T-cell (primary cell): ENCODE measurements at regions of chr15 and their contacts with region 1.

Region 1: DNA sequence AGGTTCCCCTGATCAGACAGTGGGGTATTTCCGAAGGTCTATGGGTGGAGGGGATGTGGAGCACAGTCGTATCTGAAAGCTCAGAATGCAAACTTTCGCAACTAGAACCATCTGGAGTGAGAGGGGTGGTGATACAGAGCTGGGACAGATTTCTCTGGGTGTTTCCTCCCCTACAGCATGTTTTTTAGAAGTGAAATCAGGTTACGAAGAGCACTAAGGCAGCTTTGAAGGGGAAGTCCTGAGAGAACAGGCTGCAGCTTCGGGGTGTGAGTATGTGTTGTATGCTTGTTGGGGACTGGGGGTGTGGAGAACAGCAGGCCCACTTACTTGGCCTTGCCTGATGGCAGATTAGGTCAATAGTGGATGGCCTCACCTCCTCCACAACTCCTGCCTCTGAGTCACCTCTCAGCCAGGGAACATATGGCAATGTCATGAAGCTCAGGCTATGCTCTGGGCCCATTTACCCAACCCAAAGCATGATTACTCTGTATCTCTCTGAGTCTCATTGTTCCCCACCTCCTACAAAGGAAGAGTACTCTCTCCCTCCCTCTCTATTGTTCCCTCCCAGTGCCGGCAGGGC is 107.2 kb upstream of the RASGRP1 start:
- DNase-seq: peak in 31 of 35 experiments; percentile 22 to 88 (median 65)
- ATAC-seq: peak; percentile 47 to 78 (median 50)
- H3K4me3 ChIP-seq: no peak overlapping the region
- H3K4me3 Mint-ChIP-seq: peak overlapping the region; percentile 40 to 64 (median 47)
- H3K27ac ChIP-seq: peak overlapping the region; percentile 98
- H3K27ac Mint-ChIP-seq: peak overlapping the region; percentile 95 to 98
- H3K4me1 ChIP-seq: peaks cover 55 to 62% of the 10 kb centered on the region in 2 experiments
- H3K4me1 Mint-ChIP-seq: peaks cover 72 to 86% (median 78%) of the 10 kb centered on the region in 3 donors
- H3K27me3 ChIP-seq: no peaks in the 10 kb centered on the region
- H3K27me3 Mint-ChIP-seq: no peaks in the 10 kb centered on the region

Region 2: GRCh38 chr15:38563723-38564519 is 107.8 kb before region 1 on chr15:
- CTCF ChIA-PET with region 1: interaction called, 10 to 29 read pairs
- POLR2A ChIA-PET with region 1: interaction called, 3 to 8 read pairs
- DNase-seq: peak; percentile 65 to 92 (median 82)
- ATAC-seq: peak; percentile 75 to 77 (median 76)
- H3K4me3 ChIP-seq: peak overlapping the region; percentile 90
- H3K4me3 Mint-ChIP-seq: peak overlapping the region; percentile 87 to 96 (median 88)
- H3K27ac ChIP-seq: peak overlapping the region; percentile 83
- H3K27ac Mint-ChIP-seq: peak overlapping the region; percentile 94 to 98
- H3K4me1 ChIP-seq: peaks cover 40 to 51% of the 10 kb centered on the region in 2 experiments
- H3K4me1 Mint-ChIP-seq: peaks cover 58 to 65% (median 64%) of the 10 kb centered on the region in 3 donors
- H3K27me3 ChIP-seq: no peaks in the 10 kb centered on the region
- H3K27me3 Mint-ChIP-seq: no peaks in the 10 kb centered on the region

Region 3: DNA sequence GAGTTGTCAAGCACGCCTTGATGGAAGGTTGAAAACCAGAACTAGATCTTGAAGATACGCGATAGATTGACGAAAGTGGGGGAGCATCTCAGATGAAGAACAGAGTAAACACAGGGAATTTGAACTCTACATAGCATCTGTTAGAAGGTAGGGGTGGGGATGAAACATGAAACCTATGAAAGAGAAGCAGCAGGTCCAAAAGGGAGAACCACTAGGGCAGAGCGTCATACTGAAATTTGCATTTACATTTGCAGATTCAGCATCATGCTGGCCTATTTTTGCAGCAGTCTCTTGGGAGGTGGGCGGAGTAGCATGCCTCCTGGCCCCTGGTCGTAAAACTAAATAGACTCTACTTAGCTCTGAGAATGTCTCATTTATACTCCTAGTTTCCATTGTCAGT is 61.0 kb before region 1 on chr15:
- CTCF ChIA-PET with region 1: no interaction called
- POLR2A ChIA-PET with region 1: no interaction called
- DNase-seq: peak in 22 of 35 experiments; percentile 5 to 56 (median 16)
- ATAC-seq: peak; percentile 37 to 91 (median 46)
- H3K4me3 ChIP-seq: no peak overlapping the region
- H3K4me3 Mint-ChIP-seq: peak overlapping the region in 2 of 3 donors; percentile 6 to 28
- H3K27ac ChIP-seq: peak overlapping the region; percentile 58
- H3K27ac Mint-ChIP-seq: peak overlapping the region; percentile 88 to 93
- H3K4me1 ChIP-seq: peaks cover 27 to 40% of the 10 kb centered on the region in 2 experiments
- H3K4me1 Mint-ChIP-seq: peaks cover 50 to 62% (median 55%) of the 10 kb centered on the region in 3 donors
- H3K27me3 ChIP-seq: no peaks in the 10 kb centered on the region
- H3K27me3 Mint-ChIP-seq: no peaks in the 10 kb centered on the region

Region 4: GRCh38 chr15:38652998-38653397 is 18.8 kb before region 1 on chr15:
- CTCF ChIA-PET with region 1: interaction called, 3 to 58 read pairs
- POLR2A ChIA-PET with region 1: interaction called, 5 to 21 read pairs
- DNase-seq: peak; percentile 54 to 94 (median 80)
- ATAC-seq: peak; percentile 77 to 83 (median 80)
- H3K4me3 ChIP-seq: peak overlapping the region in 1 of 2 donors; percentile 20
- H3K4me3 Mint-ChIP-seq: peak overlapping the region; percentile 69 to 85 (median 78)
- H3K27ac ChIP-seq: peak overlapping the region; percentile 55
- H3K27ac Mint-ChIP-seq: peak overlapping the region; percentile 98
- H3K4me1 ChIP-seq: peaks cover 61 to 63% of the 10 kb centered on the region in 2 experiments
- H3K4me1 Mint-ChIP-seq: peaks cover 75 to 84% (median 81%) of the 10 kb centered on the region in 3 donors
- H3K27me3 ChIP-seq: no peaks in the 10 kb centered on the region
- H3K27me3 Mint-ChIP-seq: no peaks in the 10 kb centered on the region

Region 5: DNA sequence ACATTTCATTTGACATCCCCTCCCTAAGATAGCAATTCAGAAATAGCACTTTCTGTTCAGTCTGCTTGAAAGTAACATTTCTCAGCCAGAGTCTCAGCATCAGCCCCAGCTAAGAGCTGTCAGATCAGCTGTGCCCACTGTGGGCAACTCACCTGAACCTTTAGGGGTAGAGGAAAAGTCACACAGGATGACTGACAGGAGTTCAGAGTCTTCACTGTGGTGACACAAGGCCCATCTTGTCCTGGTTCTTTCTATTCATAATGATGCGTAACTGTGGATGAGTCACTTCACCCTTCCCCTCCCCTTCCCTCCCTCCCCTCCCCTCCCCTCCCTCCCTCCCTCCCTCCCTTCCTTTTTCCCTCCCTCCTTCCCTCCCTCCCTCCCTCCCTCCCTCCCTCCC is 11.0 kb before region 1 on chr15:
- CTCF ChIA-PET with region 1: interaction called, 3 to 10 read pairs
- POLR2A ChIA-PET with region 1: interaction called, 7 to 11 read pairs
- DNase-seq: peak in 7 of 35 experiments; percentile 5 to 40 (median 20)
- ATAC-seq: peak; percentile 44 to 63 (median 58)
- H3K4me3 ChIP-seq: no peak overlapping the region
- H3K4me3 Mint-ChIP-seq: peak overlapping the region in 2 of 3 donors; percentile 29 to 59
- H3K27ac ChIP-seq: peak overlapping the region; percentile 48
- H3K27ac Mint-ChIP-seq: peak overlapping the region; percentile 90 to 92
- H3K4me1 ChIP-seq: peaks cover 32 to 52% of the 10 kb centered on the region in 2 experiments
- H3K4me1 Mint-ChIP-seq: peaks cover 70 to 74% (median 73%) of the 10 kb centered on the region in 3 donors
- H3K27me3 ChIP-seq: no peaks in the 10 kb centered on the region
- H3K27me3 Mint-ChIP-seq: no peaks in the 10 kb centered on the region

Region 6: GRCh38 chr15:38683382-38684242 is 11.8 kb after region 1 on chr15:
- CTCF ChIA-PET with region 1: interaction called, 8 to 74 read pairs
- POLR2A ChIA-PET with region 1: interaction called, 4 to 7 read pairs
- DNase-seq: peak in 34 of 35 experiments; percentile 46 to 88 (median 67)
- ATAC-seq: peak; percentile 47 to 60 (median 50)
- H3K4me3 ChIP-seq: no peak overlapping the region
- H3K4me3 Mint-ChIP-seq: peak overlapping the region in 2 of 3 donors; percentile 57 to 68
- H3K27ac ChIP-seq: peak overlapping the region; percentile 67
- H3K27ac Mint-ChIP-seq: peak overlapping the region; percentile 91 to 98
- H3K4me1 ChIP-seq: peaks cover 59 to 60% of the 10 kb centered on the region in 2 experiments
- H3K4me1 Mint-ChIP-seq: peaks cover 69 to 86% (median 85%) of the 10 kb centered on the region in 3 donors
- H3K27me3 ChIP-seq: no peaks in the 10 kb centered on the region
- H3K27me3 Mint-ChIP-seq: no peaks in the 10 kb centered on the region